Ovary (tissue), 10 donors: ENCODE measurements at regions of chr5 and their contacts with region 1.

Region 1: DNA sequence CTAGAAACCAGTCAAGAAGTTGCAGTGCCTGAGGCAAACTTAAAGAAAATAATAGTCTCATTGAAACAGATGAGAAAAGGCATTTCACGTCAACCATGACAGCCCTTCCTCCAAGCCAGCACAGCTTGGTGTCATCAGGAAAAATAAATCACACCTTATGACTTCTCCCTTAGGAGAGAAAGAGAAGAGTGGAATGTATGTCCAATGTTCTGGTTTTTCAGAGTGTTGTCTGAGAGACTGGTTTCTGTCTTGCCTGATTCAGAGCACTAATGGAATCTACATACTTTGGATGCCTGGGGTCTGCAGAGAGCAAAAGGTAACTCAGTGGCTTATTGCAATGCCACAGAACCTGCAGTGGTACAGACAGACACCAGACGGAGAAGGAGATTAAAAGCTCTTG is 105.5 kb upstream of the PDE4D start:
- DNase-seq: no peak
- H3K4me3 ChIP-seq: no peak overlapping the region
- H3K27ac ChIP-seq: no peak overlapping the region
- H3K4me1 ChIP-seq: no peaks in the 10 kb centered on the region
- H3K27me3 ChIP-seq: no peaks in the 10 kb centered on the region
- CTCF ChIP-seq: no peak
- EP300 ChIP-seq: no peak
- POLR2A ChIP-seq: no peak

Region 2: GRCh38 chr5:59972043-59972442 is 27.0 kb before region 1 on chr5:
- intact Hi-C with region 1: loop called in 1 of 4 experiments (anchors 1 kb)
- DNase-seq: no peak
- H3K4me3 ChIP-seq: no peak overlapping the region
- H3K27ac ChIP-seq: no peak overlapping the region
- H3K4me1 ChIP-seq: no peaks in the 10 kb centered on the region
- H3K27me3 ChIP-seq: no peaks in the 10 kb centered on the region
- CTCF ChIP-seq: no peak
- EP300 ChIP-seq: no peak
- POLR2A ChIP-seq: no peak

Region 3: GRCh38 chr5:60018091-60018490 is 19.0 kb after region 1 on chr5:
- intact Hi-C with region 1: no loop called
- DNase-seq: no peak
- H3K4me3 ChIP-seq: no peak overlapping the region
- H3K27ac ChIP-seq: no peak overlapping the region
- H3K4me1 ChIP-seq: no peaks in the 10 kb centered on the region
- H3K27me3 ChIP-seq: no peaks in the 10 kb centered on the region
- CTCF ChIP-seq: no peak
- EP300 ChIP-seq: no peak
- POLR2A ChIP-seq: no peak